ENCODE measurements at regions of chr10 and their contacts with region 1.

Region 1: GRCh38 chr10:61757525-61758397 is 95.0 kb downstream of the CABCOCO1 start:
- DNase-seq: no peak
- ATAC-seq: no peak
- H3K4me3 ChIP-seq: no peak overlapping the region
- H3K27ac ChIP-seq: no peak overlapping the region
- H3K4me1 ChIP-seq: peaks cover 1% of the 10 kb centered on the region
- H3K27me3 ChIP-seq: no peaks in the 10 kb centered on the region
- CTCF ChIP-seq: no peak

Region 2: GRCh38 chr10:61125560-61126170 is 632.1 kb before region 1 on chr10:
- intact Hi-C with region 1: no loop called
- DNase-seq: no peak
- ATAC-seq: peak in 3 of 4 donors; percentile 58 to 74 (median 65)
- H3K4me3 ChIP-seq: no peak overlapping the region
- H3K27ac ChIP-seq: no peak overlapping the region
- H3K4me1 ChIP-seq: peaks cover 8% of the 10 kb centered on the region
- H3K27me3 ChIP-seq: no peaks in the 10 kb centered on the region
- CTCF ChIP-seq: no peak

Region 3: DNA sequence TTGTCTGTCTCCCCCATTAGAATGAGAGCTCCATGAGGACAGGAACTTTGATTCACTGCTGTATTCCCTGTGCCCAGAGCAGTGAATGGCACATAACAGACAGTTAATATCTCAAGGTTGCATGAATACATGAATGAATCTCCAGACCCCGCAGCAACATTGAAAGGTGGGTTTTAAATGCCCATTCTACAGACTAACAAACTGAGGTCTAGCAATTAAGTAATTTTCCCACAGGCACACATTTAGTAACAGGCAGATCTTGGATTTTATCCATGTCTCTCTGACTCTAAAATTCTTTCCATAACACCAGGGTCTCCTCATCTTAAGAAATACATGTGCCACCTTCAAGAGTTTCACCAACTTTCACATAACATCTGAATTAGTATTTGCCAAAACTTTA is 39.0 kb after region 1 on chr10:
- intact Hi-C with region 1: loop called in 1 of 2 experiments (anchors 1 kb)
- DNase-seq: no peak
- ATAC-seq: no peak
- H3K4me3 ChIP-seq: no peak overlapping the region
- H3K27ac ChIP-seq: no peak overlapping the region
- H3K4me1 ChIP-seq: no peaks in the 10 kb centered on the region
- H3K27me3 ChIP-seq: no peaks in the 10 kb centered on the region
- CTCF ChIP-seq: no peak

Measured in psoas muscle (tissue), 8 donors.